ENCODE measurements at regions of chr6 and their contacts with region 1.

Region 1: DNA sequence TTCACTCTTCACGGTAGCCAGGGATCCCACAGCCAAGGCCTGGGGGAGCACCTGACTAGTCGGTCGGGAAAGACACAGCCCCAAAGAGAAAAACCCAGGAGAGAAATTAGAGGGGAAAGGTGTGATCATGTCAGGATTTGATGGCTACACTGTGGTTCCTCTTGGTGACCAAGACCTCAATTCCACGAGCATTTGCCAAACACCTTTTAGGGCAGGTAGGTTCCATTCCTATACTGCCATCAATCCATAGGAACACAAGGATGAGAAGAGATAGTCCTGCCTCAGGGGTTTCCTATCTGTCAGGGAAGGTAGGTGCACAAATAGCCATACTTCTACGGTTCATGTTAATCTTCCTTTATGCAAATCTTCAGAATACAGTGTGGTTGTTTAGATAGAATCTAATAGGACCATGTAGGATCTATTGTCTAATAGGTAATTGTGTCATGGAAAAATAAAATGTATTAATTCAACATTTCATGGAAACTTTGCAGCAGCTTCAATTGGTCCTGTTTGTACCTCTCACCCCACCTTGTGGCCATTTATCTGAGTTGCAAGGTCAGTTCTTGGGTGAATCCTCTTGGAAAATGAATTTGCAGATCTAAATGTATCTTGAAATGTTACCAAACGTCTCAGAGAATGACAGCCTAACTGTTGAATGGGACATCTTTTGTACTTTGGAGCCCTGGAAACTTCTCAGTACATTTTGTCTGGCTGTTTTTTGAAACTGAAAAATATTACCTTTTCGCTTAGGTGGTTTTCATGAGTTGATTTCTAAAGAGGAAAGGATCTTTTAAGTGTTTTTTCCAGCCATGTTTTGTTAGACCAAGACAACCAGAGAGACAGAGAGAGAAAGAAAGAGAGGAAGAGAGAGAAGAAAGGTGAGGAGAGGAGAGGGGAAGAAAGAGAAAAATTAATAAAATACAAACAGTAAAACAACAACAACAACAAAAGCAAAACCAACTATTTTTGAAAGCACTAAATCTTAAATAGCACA is 33.7 kb upstream of the IYD start:
- DNase-seq: peak; percentile 61 to 65
- H3K4me3 ChIP-seq: no peak overlapping the region
- H3K4me1 ChIP-seq: no peaks in the 10 kb centered on the region
- H3K27me3 ChIP-seq: no peaks in the 10 kb centered on the region

Region 2: DNA sequence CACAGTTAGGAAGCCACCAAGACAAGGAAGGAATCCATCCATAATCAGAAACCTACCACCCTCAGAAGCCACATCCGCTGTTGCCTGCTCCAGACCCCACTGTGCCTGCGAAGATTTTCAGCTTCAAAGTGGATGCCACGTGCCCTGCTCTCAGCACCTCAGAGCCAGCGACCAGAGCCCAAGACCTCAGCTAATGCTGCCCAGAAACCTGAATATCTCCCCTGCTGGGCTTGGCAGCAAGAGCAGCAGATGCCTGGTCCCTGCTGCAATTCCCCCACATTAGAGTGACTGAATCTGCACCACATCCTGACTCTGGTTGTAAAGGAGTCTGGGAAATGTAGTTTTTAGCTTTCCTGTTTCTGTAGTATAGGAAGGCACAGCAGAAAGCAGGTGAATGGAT is 255.5 kb before region 1 on chr6:
- in situ Hi-C with region 1: loop called (anchors 5 kb)
- DNase-seq: no peak
- H3K4me3 ChIP-seq: no peak overlapping the region
- H3K4me1 ChIP-seq: no peaks in the 10 kb centered on the region
- H3K27me3 ChIP-seq: no peaks in the 10 kb centered on the region

Region 3: GRCh38 chr6:150184850-150185731 is 150.0 kb before region 1 on chr6:
- in situ Hi-C with region 1: no loop called
- DNase-seq: no peak
- H3K4me3 ChIP-seq: no peak overlapping the region
- H3K4me1 ChIP-seq: no peaks in the 10 kb centered on the region
- H3K27me3 ChIP-seq: no peaks in the 10 kb centered on the region